Activated CD4-positive, alpha-beta T cell treated with anti-CD3 and anti-CD28 coated beads, Interleukin-2, amount 10 ng/mL, durations not matched to agents 24 days and 14 days (primary cell): ENCODE measurements at regions of chr9 and their contacts with region 1.

Region 1: GRCh38 chr9:34637356-34638137 is at the start of gene SIGMAR1:
- DNase-seq: peak; percentile 98
- H3K4me3 Mint-ChIP-seq: peak within 1 kb of the TSS; percentile 99
- H3K27ac Mint-ChIP-seq: peak within 1 kb of the TSS; percentile 93
- H3K4me1 Mint-ChIP-seq: peaks cover 34% of the 10 kb centered on the region
- H3K27me3 Mint-ChIP-seq: no peaks in the 10 kb centered on the region
- total RNA-seq, gene SIGMAR1: 117 and 128 TPM in 2 replicates

Region 2: GRCh38 chr9:34522971-34523797 is 114.4 kb before region 1 on chr9 and contains the start of gene ENHO:
- intact Hi-C with region 1: loop called (anchors 1 kb)
- DNase-seq: peak; percentile 98
- H3K4me3 Mint-ChIP-seq: peak within 1 kb of the TSS; percentile 66
- H3K27ac Mint-ChIP-seq: peak within 1 kb of the TSS; percentile 0
- H3K4me1 Mint-ChIP-seq: peaks cover 11% of the 10 kb centered on the region
- H3K27me3 Mint-ChIP-seq: peaks cover 46% of the 10 kb centered on the region
- total RNA-seq, gene ENHO: not detected in 2 replicates

Region 3: GRCh38 chr9:34620061-34620994 is 17.2 kb before region 1 on chr9 and contains the start of gene DCTN3:
- intact Hi-C with region 1: loop called (anchors 1 kb)
- DNase-seq: peak; percentile 97
- H3K4me3 Mint-ChIP-seq: peak within 1 kb of the TSS; percentile 90
- H3K27ac Mint-ChIP-seq: peak within 1 kb of the TSS; percentile 84
- H3K4me1 Mint-ChIP-seq: peaks cover 20% of the 10 kb centered on the region
- H3K27me3 Mint-ChIP-seq: peaks cover 31% of the 10 kb centered on the region
- total RNA-seq, gene DCTN3: 50.9 and 57.0 TPM in 2 replicates

Region 4: GRCh38 chr9:34665381-34666250 is 28.1 kb after region 1 on chr9:
- intact Hi-C with region 1: loop called (anchors 1 kb)
- DNase-seq: peak; percentile 97
- H3K4me3 Mint-ChIP-seq: peak overlapping the region; percentile 91
- H3K27ac Mint-ChIP-seq: peak overlapping the region; percentile 90
- H3K4me1 Mint-ChIP-seq: peaks cover 45% of the 10 kb centered on the region
- H3K27me3 Mint-ChIP-seq: no peaks in the 10 kb centered on the region

Region 5: GRCh38 chr9:34701023-34701768 is 63.6 kb after region 1 on chr9:
- intact Hi-C with region 1: no loop called
- DNase-seq: peak; percentile 94
- H3K4me3 Mint-ChIP-seq: peak overlapping the region; percentile 77
- H3K27ac Mint-ChIP-seq: no peak overlapping the region
- H3K4me1 Mint-ChIP-seq: peaks cover 9% of the 10 kb centered on the region
- H3K27me3 Mint-ChIP-seq: peaks cover 21% of the 10 kb centered on the region